ENCODE measurements at regions of chr9 and their contacts with region 1.

Region 1: GRCh38 chr9:131125128-131126058 is at the start of gene NUP214:
- DNase-seq: peak; percentile 98 to 100 (median 100)
- ATAC-seq: peak; percentile 98
- H3K4me3 ChIP-seq: peak within 1 kb of the TSS; percentile 48
- H3K27ac ChIP-seq: peak within 1 kb of the TSS; percentile 76
- H3K4me1 ChIP-seq: peaks cover 13 to 23% of the 10 kb centered on the region in 2 experiments
- H3K27me3 ChIP-seq: peaks cover 13 to 14% of the 10 kb centered on the region in 2 experiments; a peak in 4 of 5 replicates
- CTCF ChIP-seq: no peak
- EP300 ChIP-seq: no peak
- POLR2A ChIP-seq: no peak
- RAD21 ChIP-seq: no peak
- polyA plus RNA-seq, gene NUP214: 78.9 to 81.6 TPM

Region 2: DNA sequence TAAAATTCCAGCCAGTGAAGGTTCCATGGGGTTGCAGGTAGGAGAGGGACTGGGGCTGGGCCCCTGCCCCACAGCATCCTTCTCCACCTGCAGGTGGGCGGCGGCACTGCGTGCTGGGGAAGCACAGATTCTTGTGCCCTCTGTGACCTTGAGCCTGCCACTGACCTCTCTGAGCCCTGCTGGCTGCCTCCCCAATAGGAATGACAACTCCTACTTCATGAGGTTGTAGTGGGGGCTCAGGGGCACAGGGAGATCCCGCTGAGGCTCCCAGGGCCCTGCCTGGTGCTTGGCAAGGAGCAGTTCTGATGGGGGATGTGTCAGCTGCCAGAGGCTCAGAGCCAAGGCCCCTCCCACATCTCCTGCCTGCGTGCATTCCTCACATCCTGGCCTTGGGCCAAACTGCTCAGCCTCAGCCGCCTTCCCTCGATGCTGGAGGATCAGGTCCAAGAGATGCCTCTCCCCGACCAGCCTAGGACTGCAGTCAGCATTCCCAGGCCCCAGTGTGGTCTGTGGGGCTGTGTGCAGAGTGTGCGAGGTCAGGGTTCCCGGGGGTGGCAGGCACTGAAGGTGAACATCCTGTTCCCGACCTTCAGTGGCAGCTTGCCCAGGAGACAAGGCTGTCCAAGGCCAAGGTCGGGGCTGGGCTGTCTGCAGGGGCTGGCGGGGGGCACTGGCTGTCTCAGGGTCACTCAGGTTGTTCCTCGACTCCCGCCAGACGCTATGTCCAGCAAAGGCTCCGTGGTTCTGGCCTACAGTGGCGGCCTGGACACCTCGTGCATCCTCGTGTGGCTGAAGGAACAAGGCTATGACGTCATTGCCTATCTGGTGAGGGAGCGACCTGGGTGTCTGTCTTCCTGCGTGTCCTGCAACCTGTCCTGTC is 673.6 kb before region 1 on chr9:
- CTCF ChIA-PET with region 1: no interaction called
- POLR2A ChIA-PET with region 1: no interaction called
- in situ Hi-C with region 1: no loop called
- intact Hi-C with region 1: no loop called
- DNase-seq: peak; percentile 67 to 74 (median 72)
- ATAC-seq: peak; percentile 67
- H3K4me3 ChIP-seq: no peak overlapping the region
- H3K27ac ChIP-seq: no peak overlapping the region
- H3K4me1 ChIP-seq: peaks cover 19 to 36% of the 10 kb centered on the region in 2 experiments
- H3K27me3 ChIP-seq: no peaks in the 10 kb centered on the region; a peak in 1 of 5 replicates
- CTCF ChIP-seq: peak; percentile 32 to 65 (median 35)
- EP300 ChIP-seq: no peak
- POLR2A ChIP-seq: no peak
- RAD21 ChIP-seq: peak in 1 of 2 experiments; percentile 39; a peak in 2 of 4 replicates

Region 3: GRCh38 chr9:131046581-131047202 is 78.7 kb before region 1 on chr9:
- CTCF ChIA-PET with region 1: no interaction called
- POLR2A ChIA-PET with region 1: interaction called, 3,336 read pairs
- in situ Hi-C with region 1: no loop called
- intact Hi-C with region 1: no loop called
- DNase-seq: peak in 3 of 4 experiments; percentile 99 to 100 (median 99)
- ATAC-seq: peak; percentile 93
- H3K4me3 ChIP-seq: no peak overlapping the region
- H3K27ac ChIP-seq: no peak overlapping the region
- H3K4me1 ChIP-seq: peaks cover 0 to 23% of the 10 kb centered on the region in 2 experiments; a peak in 3 of 5 replicates
- H3K27me3 ChIP-seq: peaks cover 55 to 73% of the 10 kb centered on the region in 2 experiments
- CTCF ChIP-seq: no peak
- EP300 ChIP-seq: no peak
- POLR2A ChIP-seq: no peak
- RAD21 ChIP-seq: no peak

Region 4: DNA sequence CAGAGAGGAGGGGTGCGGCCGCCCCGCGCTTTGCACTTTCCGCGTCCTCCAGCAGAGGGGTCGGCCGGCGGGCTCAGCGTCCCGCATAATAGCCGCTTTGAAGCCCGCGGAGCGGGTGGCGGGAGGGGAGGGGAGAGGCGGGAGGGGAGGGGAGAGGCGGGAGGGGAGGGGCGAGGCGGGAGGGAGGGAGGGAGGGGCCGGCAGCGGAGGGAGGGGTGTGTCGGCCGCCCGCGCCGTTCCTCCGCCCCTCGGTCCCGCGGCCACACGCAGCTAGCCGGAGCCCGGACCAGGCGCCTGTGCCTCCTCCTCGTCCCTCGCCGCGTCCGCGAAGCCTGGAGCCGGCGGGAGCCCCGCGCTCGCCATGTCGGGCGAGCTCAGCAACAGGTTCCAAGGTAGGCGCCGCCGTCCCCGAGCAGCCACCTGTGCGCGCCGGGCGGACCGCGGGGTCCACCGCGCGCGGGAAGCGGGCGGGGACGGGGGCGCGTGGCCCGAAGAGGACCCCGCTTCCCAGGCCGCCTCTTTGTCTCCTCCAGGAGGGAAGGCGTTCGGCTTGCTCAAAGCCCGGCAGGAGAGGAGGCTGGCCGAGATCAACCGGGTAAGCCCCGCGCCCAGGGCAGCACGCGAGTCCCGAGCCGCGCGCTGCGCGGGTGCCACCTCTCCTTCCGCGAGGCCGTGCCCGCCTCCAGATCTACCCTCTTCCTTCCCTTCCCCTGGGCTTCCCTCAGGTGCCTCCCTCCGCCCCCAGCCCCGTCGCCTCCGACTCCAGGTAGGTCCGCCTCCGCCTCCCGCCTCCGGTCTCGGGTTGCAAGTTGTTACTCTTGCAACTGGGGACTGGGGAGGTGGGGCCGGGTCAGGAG is 28.9 kb before region 1 on chr9 and contains the start of gene AIF1L:
- CTCF ChIA-PET with region 1: no interaction called
- POLR2A ChIA-PET with region 1: interaction called, 3,336 read pairs
- in situ Hi-C with region 1: no loop called
- intact Hi-C with region 1: loop called (anchors 1 kb)
- DNase-seq: peak; percentile 87 to 100 (median 100)
- ATAC-seq: peak; percentile 65
- H3K4me3 ChIP-seq: peak within 1 kb of the TSS; percentile 35
- H3K27ac ChIP-seq: no peak within 1 kb of the TSS
- H3K4me1 ChIP-seq: peaks cover 22 to 62% of the 10 kb centered on the region in 2 experiments
- H3K27me3 ChIP-seq: peaks cover 70 to 90% of the 10 kb centered on the region in 2 experiments
- CTCF ChIP-seq: no peak
- EP300 ChIP-seq: no peak
- POLR2A ChIP-seq: no peak
- RAD21 ChIP-seq: no peak
- polyA plus RNA-seq, gene AIF1L: 0.34 to 0.77 TPM

Region 5: DNA sequence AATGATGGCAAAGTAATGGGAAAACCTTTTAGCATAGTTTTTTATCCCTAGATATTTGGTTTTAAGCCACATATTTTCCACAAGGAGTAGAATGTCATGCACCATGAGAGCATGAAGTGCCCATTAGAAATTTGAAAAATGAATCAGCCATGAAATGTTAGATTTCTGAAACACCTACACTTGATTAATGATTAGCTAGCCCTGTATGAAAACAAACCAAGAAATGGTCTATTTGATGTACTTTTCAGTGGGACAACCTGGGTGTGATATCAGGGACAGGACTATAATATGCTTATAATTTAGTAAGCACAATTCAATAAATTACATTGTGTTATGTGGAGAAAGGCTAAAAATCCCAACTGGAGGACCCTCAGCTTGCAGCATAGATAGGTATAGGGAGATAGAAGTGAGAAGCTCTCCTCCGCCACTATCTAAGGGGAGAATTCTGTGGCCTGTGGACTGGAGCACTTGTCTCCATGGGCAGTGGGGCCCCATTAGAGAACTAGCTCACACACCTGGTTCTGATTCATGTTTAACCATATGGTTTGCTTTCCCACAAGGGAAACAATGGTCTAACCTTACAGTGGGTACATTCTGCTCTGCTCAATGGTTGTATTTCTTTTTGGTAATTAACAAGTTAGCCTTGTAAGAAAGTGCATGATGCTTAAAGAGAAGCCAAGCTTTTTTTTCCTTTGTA is 35.2 kb after region 1 on chr9:
- CTCF ChIA-PET with region 1: no interaction called
- POLR2A ChIA-PET with region 1: interaction called, 583 read pairs
- in situ Hi-C with region 1: no loop called
- intact Hi-C with region 1: no loop called
- DNase-seq: peak in 3 of 4 experiments; percentile 68 to 81 (median 78)
- ATAC-seq: peak; percentile 13
- H3K4me3 ChIP-seq: no peak overlapping the region
- H3K27ac ChIP-seq: no peak overlapping the region
- H3K4me1 ChIP-seq: no peaks in the 10 kb centered on the region
- H3K27me3 ChIP-seq: no peaks in the 10 kb centered on the region
- CTCF ChIP-seq: no peak
- EP300 ChIP-seq: no peak
- POLR2A ChIP-seq: no peak
- RAD21 ChIP-seq: no peak

Region 6: DNA sequence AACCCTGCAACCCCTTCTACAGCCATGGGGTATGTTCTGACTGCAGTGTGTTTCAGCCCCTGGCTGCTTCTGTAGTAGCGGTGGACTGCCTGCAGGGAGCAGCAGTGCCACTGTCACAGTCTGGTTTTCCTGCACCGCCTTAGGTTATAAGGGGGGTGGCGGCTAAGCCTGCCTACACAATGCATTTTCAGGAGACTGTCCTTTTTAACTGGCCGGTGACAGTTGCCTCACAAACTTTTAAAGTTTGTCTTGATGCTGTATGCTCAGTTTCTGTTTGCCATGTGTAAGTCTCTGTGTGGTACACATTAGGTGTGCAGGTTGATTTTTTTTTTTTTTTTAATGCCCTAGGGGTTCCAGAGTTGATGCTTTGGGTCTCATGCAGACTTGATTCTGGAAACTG is 53.0 kb after region 1 on chr9:
- CTCF ChIA-PET with region 1: no interaction called
- POLR2A ChIA-PET with region 1: interaction called, 26 read pairs
- in situ Hi-C with region 1: no loop called
- intact Hi-C with region 1: loop called (anchors 2 kb)
- DNase-seq: peak; percentile 100
- ATAC-seq: peak; percentile 96
- H3K4me3 ChIP-seq: no peak overlapping the region
- H3K27ac ChIP-seq: no peak overlapping the region
- H3K4me1 ChIP-seq: peaks cover 11 to 29% of the 10 kb centered on the region in 2 experiments; a peak in 4 of 5 replicates
- H3K27me3 ChIP-seq: no peaks in the 10 kb centered on the region
- CTCF ChIP-seq: no peak
- EP300 ChIP-seq: no peak
- POLR2A ChIP-seq: no peak
- RAD21 ChIP-seq: no peak

Region 7: DNA sequence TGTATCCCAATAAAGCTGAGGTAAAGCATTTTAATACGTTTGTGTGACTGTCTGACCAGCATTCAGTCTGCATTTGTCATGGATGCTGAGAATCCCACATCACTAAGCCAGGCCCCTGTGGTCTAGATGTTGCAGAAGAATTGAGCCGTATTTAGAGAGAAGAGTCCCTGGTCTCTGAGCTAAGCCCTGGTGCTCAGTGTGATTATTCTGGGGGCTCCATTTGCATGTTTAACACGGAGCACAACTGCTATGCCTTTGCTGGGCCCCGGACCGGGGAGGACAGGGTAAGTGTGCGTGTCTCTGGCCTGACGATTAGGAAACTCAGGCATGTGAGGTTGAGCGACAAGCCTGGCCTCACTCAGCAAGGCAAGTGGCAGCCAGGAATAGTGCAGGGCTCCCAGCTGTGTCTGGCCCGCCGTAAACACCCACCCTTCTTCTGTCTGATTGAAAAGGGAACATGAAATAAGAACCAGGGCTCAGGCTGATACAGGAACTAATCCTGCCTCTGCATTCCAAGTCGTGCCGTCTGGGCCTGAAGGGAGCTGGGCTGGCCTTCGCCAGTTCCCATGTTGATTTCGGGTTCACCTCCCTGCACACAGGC is 128.6 kb after region 1 on chr9:
- CTCF ChIA-PET with region 1: no interaction called
- POLR2A ChIA-PET with region 1: interaction called, 11 read pairs
- in situ Hi-C with region 1: no loop called
- intact Hi-C with region 1: no loop called
- DNase-seq: no peak
- ATAC-seq: peak; percentile 1; the same call in 1 of the 3 replicates
- H3K4me3 ChIP-seq: no peak overlapping the region
- H3K27ac ChIP-seq: no peak overlapping the region
- H3K4me1 ChIP-seq: peaks cover 12 to 29% of the 10 kb centered on the region in 2 experiments
- H3K27me3 ChIP-seq: peaks cover 0 to 7% of the 10 kb centered on the region in 2 experiments; a peak in 1 of 5 replicates
- CTCF ChIP-seq: no peak
- EP300 ChIP-seq: no peak
- POLR2A ChIP-seq: no peak
- RAD21 ChIP-seq: no peak

Region 8: DNA sequence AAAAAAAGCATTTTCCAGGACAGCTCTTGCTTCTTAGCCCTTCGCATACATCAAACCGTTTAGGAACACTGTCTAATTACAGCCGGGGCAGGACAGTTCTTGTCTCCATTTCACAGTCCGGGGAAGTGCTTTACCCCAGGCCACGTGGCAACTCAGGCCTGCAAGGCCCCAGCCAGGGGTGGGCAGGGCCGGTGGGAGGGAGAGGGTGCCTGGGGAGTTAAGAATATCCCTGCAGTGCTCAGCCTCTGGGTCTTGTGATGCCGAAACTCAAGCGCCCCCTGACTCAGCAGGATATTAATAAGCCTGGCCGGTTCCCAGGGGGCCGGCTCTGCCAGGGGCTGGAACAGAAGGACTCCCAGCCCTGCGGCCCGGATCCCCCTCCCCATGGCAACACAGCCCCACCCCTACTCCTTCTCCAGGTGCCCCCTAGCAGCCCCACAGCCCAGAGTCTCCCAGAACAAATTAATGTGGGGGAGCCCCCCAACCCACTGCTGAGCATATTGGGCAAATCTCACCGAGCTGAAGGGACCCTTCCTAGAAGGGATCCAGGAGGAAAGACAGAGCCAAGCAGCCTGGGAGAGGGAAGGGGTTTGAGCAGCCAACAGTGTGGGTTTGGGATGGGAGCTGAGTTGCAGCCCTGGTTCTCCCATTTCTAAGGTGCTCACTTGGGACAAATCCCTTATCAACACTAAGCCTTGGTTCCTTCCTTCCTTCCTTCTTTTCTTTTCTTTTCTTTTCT is 209.4 kb after region 1 on chr9:
- CTCF ChIA-PET with region 1: no interaction called
- POLR2A ChIA-PET with region 1: interaction called, 4 read pairs
- in situ Hi-C with region 1: no loop called
- intact Hi-C with region 1: loop called (anchors 10 kb)
- DNase-seq: peak in 3 of 4 experiments; percentile 24 to 26 (median 25)
- ATAC-seq: 0 out of 3 replicates have a peak, but pooled peaks have one; percentile 3
- H3K4me3 ChIP-seq: no peak overlapping the region
- H3K27ac ChIP-seq: no peak overlapping the region
- H3K4me1 ChIP-seq: peaks cover 21 to 45% of the 10 kb centered on the region in 2 experiments; a peak in 4 of 5 replicates
- H3K27me3 ChIP-seq: no peaks in the 10 kb centered on the region
- CTCF ChIP-seq: no peak
- EP300 ChIP-seq: no peak
- POLR2A ChIP-seq: no peak
- RAD21 ChIP-seq: no peak

Region 9: GRCh38 chr9:131407717-131408195 is 282.4 kb after region 1 on chr9:
- CTCF ChIA-PET with region 1: no interaction called
- POLR2A ChIA-PET with region 1: no interaction called
- in situ Hi-C with region 1: no loop called
- intact Hi-C with region 1: no loop called
- DNase-seq: peak; percentile 34 to 61 (median 48)
- ATAC-seq: peak; percentile 77
- H3K4me3 ChIP-seq: no peak overlapping the region
- H3K27ac ChIP-seq: no peak overlapping the region
- H3K4me1 ChIP-seq: peaks cover 37 to 40% of the 10 kb centered on the region in 2 experiments; a peak in 4 of 5 replicates
- H3K27me3 ChIP-seq: no peaks in the 10 kb centered on the region
- CTCF ChIP-seq: peak; percentile 45 to 57 (median 53); a peak in 5 of 6 replicates
- EP300 ChIP-seq: no peak
- POLR2A ChIP-seq: no peak
- RAD21 ChIP-seq: peak in 1 of 2 experiments; percentile 14; a peak in 1 of 4 replicates